ENCODE measurements at regions of chr12 and their contacts with region 1.

Region 1: DNA sequence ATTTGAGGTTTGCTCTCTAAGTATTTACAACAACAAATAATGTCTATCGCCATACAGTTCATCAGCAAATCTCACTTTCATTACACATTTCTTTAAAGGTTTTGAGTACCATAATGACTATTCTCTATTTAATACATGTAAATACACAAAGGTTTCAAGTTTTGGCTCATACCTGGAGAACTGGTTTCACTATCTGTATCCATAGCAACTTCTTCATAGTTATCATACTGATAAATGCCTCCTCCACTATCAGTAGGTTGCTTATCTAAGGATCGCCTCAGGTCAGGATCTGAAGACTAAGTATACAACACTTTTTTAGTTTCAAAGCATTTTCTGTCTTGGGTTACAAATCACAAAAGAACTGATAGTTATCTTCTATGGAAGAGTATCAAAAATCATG is 21.4 kb downstream of the ZFC3H1 start:
- DNase-seq: no peak
- CTCF ChIP-seq: no peak

Region 2: DNA sequence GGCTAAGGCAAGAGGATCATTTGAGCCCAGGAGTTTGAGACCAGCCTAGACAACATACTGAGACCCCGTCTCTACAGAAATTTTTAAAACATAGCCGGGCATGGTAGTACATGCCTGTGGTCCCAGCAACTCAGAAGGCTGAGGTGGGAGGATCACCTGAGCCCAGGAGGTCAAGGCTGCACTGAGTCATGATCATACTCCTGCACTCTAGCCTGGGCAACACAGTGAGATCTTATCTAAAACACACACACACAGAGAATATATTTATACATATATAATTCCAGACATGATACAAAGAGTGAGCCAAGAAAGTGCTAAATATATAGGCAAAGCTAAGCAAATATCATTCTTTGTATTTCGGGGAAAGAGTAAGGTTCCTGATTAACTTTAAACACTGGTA is 11.9 kb after region 1 on chr12:
- CTCF ChIA-PET with region 1: interaction called, 49 read pairs
- POLR2A ChIA-PET with region 1: no interaction called
- DNase-seq: no peak
- CTCF ChIP-seq: no peak

Region 3: DNA sequence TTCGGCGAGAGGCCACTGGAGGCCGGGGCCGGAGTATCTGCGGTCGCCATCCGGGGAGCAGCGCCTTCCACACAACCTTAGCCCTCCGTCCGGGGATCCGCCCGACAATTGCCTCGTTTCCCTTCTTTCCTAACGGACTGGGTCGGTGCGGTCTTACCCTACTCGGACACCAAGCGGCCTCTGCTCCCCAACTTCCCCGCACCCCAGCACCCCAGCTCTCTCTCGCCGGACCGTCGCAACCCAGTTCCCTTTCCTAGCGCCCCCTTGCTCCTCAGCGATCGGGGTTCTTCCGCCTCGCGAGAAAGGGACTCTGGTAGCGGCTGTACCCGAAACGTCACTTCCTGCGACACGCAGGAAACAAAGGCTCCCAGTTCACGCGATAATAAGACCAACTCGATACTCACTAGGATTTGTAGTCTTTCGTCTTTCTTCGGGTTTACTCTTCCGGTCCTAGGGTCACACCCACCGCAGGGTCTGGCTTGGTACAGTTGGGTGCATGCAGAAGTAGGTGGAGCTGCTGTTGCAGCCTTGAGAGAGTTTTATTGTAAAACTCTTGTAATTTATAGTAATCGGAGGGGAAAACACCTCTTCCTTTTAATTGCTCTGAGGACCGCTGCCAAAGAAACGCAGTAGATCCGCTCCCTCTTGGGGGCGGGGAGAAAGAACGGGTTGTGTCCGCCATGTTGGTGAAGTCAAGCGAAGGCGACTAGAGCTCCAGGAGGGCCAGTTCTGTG is 21.5 kb after region 1 on chr12 and contains the start of gene ZFC3H1:
- CTCF ChIA-PET with region 1: interaction called, 37 read pairs
- POLR2A ChIA-PET with region 1: interaction called, 5 read pairs
- DNase-seq: peak; percentile 92
- CTCF ChIP-seq: peak; percentile 33

Region 4: GRCh38 chr12:71871116-71871515 is 228.9 kb after region 1 on chr12:
- CTCF ChIA-PET with region 1: no interaction called
- POLR2A ChIA-PET with region 1: no interaction called
- DNase-seq: no peak
- CTCF ChIP-seq: no peak